CD14-positive monocyte (primary cell): ENCODE measurements at regions of chr13 and their contacts with region 1.

Region 1: DNA sequence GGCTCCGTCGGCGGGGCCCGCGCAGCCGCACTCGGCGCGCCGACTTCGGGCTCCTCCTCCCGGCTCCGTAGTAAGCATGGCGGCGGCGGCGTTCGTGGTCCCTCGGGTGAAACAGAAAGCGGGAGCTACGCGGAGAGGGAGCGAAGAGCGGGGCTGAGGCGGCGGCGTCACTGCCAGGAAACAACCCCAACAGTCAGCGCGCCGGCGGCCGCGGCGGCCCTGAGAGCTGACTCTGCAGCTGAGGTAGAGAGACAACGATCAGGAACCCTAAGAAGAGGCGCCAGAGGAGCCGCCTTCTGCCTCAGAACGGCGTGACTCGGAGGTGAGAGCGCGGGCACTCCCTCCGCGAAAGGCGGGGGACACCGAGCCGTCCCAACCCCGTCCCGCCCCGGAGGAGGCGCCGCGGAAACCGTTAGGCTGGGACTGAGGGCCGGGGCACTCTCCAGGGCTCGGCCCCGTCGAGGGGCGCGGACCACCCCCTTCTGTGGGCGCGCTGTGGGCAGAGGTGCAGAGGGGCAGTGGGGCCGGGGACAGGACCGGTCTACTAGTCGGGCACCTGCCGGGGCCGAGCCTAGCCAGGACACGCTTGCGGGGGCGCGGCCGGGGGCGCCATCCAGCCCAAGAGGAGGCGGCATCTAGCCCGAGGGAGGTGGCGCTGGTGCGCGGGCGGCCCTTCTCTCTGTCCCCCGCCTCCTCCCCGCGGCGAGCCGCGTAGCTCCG is at the start of gene FNDC3A:
- DNase-seq: peak; percentile 80 to 88 (median 82)
- H3K4me3 ChIP-seq: peak within 1 kb of the TSS; percentile 80 to 97 (median 92)
- H3K4me3 Mint-ChIP-seq: peak within 1 kb of the TSS; percentile 95 to 96
- H3K27ac ChIP-seq: peak within 1 kb of the TSS; percentile 96 to 99
- H3K27ac Mint-ChIP-seq: peak within 1 kb of the TSS; percentile 96 to 99 (median 99)
- H3K4me1 ChIP-seq: peaks cover 40 to 51% of the 10 kb centered on the region in 2 donors
- H3K4me1 Mint-ChIP-seq: peaks cover 34% of the 10 kb centered on the region
- H3K27me3 ChIP-seq: no peaks in the 10 kb centered on the region
- H3K27me3 Mint-ChIP-seq: no peaks in the 10 kb centered on the region
- CTCF ChIP-seq: no peak
- polyA plus RNA-seq, gene FNDC3A: 8.3 to 27.0 (median 12.0) TPM

Region 2: GRCh38 chr13:48902368-48902767 is 73.6 kb before region 1 on chr13:
- intact Hi-C with region 1: loop called (anchors 5 to 10 kb)
- DNase-seq: peak; percentile 27 to 82 (median 76)
- H3K4me3 ChIP-seq: peak overlapping the region in 1 of 3 experiments; percentile 15
- H3K4me3 Mint-ChIP-seq: no peak overlapping the region
- H3K27ac ChIP-seq: peak overlapping the region; percentile 55 to 78
- H3K27ac Mint-ChIP-seq: peak overlapping the region; percentile 86 to 95 (median 91)
- H3K4me1 ChIP-seq: peaks cover 29 to 50% of the 10 kb centered on the region in 2 donors
- H3K4me1 Mint-ChIP-seq: peaks cover 42% of the 10 kb centered on the region
- H3K27me3 ChIP-seq: no peaks in the 10 kb centered on the region
- H3K27me3 Mint-ChIP-seq: peaks cover 0 to 2% (median 0%) of the 10 kb centered on the region in 3 donors
- CTCF ChIP-seq: no peak